Activated CD8-positive, alpha-beta T cell treated with anti-CD3 and anti-CD28 coated beads for 36 hours (primary cell): ENCODE measurements at regions of chr7 and their contacts with region 1.

Region 1: DNA sequence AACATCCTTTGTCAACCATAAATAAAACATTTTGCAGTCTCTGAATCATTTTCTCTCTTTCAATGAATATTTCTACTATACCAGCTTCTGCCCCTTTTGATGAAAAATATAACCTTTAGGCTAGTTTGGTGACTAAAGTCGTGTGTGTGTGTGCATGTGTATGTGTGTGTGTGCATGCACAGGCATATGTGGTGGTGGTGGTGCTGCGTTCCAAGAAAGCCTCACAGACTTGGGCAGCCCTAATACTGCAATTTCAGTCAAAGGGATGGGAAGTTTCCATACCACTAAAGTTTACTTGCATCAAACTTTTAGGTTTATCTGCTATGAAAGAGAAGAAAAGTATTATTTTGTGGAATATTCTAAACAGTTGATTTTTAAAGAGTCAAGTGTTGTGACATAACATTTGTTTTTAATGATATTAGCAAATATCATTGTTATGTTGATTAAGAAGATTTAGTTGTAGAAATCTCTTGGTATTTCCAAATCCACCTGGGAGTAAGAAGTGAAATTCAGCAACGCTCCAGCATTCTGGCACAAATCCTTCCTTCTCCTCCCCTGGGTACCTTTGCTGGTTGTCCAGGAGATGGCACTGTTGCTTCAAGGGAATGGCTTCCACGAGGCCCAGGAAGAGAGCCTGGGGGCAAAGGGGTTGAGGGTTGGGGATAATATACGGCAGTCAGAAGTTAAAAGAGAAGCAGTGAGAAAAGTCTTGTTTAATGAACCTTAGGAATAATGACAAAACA is 41.5 kb downstream of the ASB4 start:
- DNase-seq: peak; percentile 4
- ATAC-seq: no peak
- H3K4me3 Mint-ChIP-seq: no peak overlapping the region
- H3K27ac Mint-ChIP-seq: no peak overlapping the region
- H3K4me1 Mint-ChIP-seq: no peaks in the 10 kb centered on the region
- H3K27me3 Mint-ChIP-seq: peaks cover 8% of the 10 kb centered on the region
- CTCF ChIP-seq: peak; percentile 61

Region 2: GRCh38 chr7:95491634-95492320 is 35.4 kb before region 1 on chr7:
- CTCF ChIA-PET with region 1: no interaction called
- POLR2A ChIA-PET with region 1: no interaction called
- intact Hi-C with region 1: no loop called
- DNase-seq: no peak
- ATAC-seq: no peak
- H3K4me3 Mint-ChIP-seq: no peak overlapping the region
- H3K27ac Mint-ChIP-seq: no peak overlapping the region
- H3K4me1 Mint-ChIP-seq: no peaks in the 10 kb centered on the region
- H3K27me3 Mint-ChIP-seq: no peaks in the 10 kb centered on the region
- CTCF ChIP-seq: no peak

Region 3: DNA sequence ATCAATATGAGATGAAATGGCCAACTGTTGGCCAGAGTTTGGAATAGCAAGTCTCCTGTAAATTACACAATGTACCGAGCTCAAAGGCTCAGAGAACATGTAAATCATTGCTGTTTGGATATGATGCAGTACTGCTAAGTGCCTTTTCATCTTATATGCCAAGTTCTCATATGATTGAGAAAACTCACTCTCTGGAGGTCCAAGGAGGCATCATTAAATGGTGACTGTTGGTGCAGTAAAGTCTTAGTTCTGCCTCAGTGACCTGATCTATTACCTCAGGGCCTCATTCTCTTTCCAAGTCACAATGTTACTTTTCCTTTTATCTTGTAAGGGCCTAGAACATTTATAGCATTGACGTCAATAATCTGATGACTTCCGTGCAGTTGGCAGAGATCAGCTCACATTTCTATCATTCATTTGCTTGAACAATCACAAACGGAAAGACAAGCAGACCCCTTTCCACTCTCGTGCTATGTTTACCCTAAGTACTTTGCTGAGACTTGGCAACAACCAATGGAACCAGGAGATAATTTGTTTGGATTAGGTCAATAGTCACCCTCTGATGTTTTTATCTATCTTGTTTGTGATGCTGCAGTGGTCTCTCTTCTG is 101.7 kb after region 1 on chr7:
- CTCF ChIA-PET with region 1: no interaction called
- POLR2A ChIA-PET with region 1: no interaction called
- intact Hi-C with region 1: no loop called
- DNase-seq: no peak
- ATAC-seq: no peak
- H3K4me3 Mint-ChIP-seq: no peak overlapping the region
- H3K27ac Mint-ChIP-seq: no peak overlapping the region
- H3K4me1 Mint-ChIP-seq: no peaks in the 10 kb centered on the region
- H3K27me3 Mint-ChIP-seq: peaks cover 2% of the 10 kb centered on the region
- CTCF ChIP-seq: no peak

Region 4: GRCh38 chr7:95690367-95690947 is 163.3 kb after region 1 on chr7:
- CTCF ChIA-PET with region 1: interaction called, 34 read pairs
- POLR2A ChIA-PET with region 1: no interaction called
- intact Hi-C with region 1: loop called (anchors 5 kb)
- DNase-seq: no peak
- ATAC-seq: peak; percentile 55
- H3K4me3 Mint-ChIP-seq: no peak overlapping the region
- H3K27ac Mint-ChIP-seq: no peak overlapping the region
- H3K4me1 Mint-ChIP-seq: no peaks in the 10 kb centered on the region
- H3K27me3 Mint-ChIP-seq: peaks cover 3% of the 10 kb centered on the region
- CTCF ChIP-seq: peak; percentile 70

Region 5: GRCh38 chr7:95905165-95905564 is 378.0 kb after region 1 on chr7:
- CTCF ChIA-PET with region 1: no interaction called
- POLR2A ChIA-PET with region 1: no interaction called
- intact Hi-C with region 1: no loop called
- DNase-seq: no peak
- ATAC-seq: no peak
- H3K4me3 Mint-ChIP-seq: no peak overlapping the region
- H3K27ac Mint-ChIP-seq: no peak overlapping the region
- H3K4me1 Mint-ChIP-seq: no peaks in the 10 kb centered on the region
- H3K27me3 Mint-ChIP-seq: peaks cover 6% of the 10 kb centered on the region
- CTCF ChIP-seq: no peak